IMR-90 (cell line): ENCODE measurements at regions of chr4 and their contacts with region 1.

Region 1: GRCh38 chr4:121192480-121192879 is 28.4 kb upstream of the TNIP3 start:
- DNase-seq: peak; percentile 48
- ATAC-seq: peak; percentile 86
- H3K4me3 ChIP-seq: peak overlapping the region; percentile 25; the same call in 1 of the 2 replicates
- H3K27ac ChIP-seq: no peak overlapping the region
- H3K4me1 ChIP-seq: no peaks in the 10 kb centered on the region
- H3K27me3 ChIP-seq: peaks cover 2% of the 10 kb centered on the region
- CTCF ChIP-seq: peak; percentile 79
- POLR2A ChIP-seq: no peak
- RAD21 ChIP-seq: peak; percentile 72

Region 2: GRCh38 chr4:121182296-121182695 is 10.2 kb before region 1 on chr4:
- CTCF ChIA-PET with region 1: interaction called, 13 read pairs
- POLR2A ChIA-PET with region 1: no interaction called
- dilution Hi-C with region 1: no loop called
- in situ Hi-C with region 1: no loop called
- intact Hi-C with region 1: no loop called
- DNase-seq: peak; percentile 33
- ATAC-seq: peak; percentile 54
- H3K4me3 ChIP-seq: peak overlapping the region; percentile 10; the same call in 1 of the 2 replicates
- H3K27ac ChIP-seq: no peak overlapping the region
- H3K4me1 ChIP-seq: no peaks in the 10 kb centered on the region
- H3K27me3 ChIP-seq: no peaks in the 10 kb centered on the region
- CTCF ChIP-seq: no peak
- POLR2A ChIP-seq: no peak
- RAD21 ChIP-seq: no peak

Region 3: DNA sequence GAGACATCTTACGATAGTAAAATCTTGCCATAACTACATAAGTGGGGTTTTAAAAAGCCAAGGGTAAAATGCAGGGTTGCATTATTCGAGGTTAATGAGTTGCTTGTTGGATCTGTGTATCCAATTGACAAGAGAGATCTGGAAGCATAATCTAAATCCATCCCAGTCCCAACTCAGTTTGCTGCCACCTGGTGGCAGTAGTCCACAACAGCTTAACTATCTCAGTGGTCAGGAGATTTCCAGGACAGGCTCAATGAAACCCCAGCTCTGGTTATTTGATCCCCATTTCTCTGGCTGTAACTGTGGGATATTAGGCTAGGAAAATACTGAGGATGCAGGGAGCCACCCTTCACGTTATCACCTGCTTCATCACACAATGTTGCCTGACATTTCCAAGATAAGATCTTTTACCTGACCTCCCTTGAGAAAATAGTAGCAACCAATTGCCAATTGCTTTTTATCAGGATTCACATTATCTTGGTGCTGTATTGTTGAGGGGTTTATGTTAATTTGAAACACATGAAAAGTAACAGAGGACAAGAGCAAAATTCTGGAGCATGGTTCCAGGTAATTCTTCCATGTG is 59.8 kb after region 1 on chr4:
- CTCF ChIA-PET with region 1: interaction called, 19 read pairs
- POLR2A ChIA-PET with region 1: no interaction called
- dilution Hi-C with region 1: no loop called
- in situ Hi-C with region 1: loop called (anchors 5 kb)
- intact Hi-C with region 1: loop called (anchors 1 kb)
- DNase-seq: peak; percentile 65
- ATAC-seq: peak; percentile 88
- H3K4me3 ChIP-seq: no peak overlapping the region
- H3K27ac ChIP-seq: no peak overlapping the region
- H3K4me1 ChIP-seq: no peaks in the 10 kb centered on the region
- H3K27me3 ChIP-seq: no peaks in the 10 kb centered on the region
- CTCF ChIP-seq: peak; percentile 78
- POLR2A ChIP-seq: no peak
- RAD21 ChIP-seq: peak; percentile 63

Region 4: DNA sequence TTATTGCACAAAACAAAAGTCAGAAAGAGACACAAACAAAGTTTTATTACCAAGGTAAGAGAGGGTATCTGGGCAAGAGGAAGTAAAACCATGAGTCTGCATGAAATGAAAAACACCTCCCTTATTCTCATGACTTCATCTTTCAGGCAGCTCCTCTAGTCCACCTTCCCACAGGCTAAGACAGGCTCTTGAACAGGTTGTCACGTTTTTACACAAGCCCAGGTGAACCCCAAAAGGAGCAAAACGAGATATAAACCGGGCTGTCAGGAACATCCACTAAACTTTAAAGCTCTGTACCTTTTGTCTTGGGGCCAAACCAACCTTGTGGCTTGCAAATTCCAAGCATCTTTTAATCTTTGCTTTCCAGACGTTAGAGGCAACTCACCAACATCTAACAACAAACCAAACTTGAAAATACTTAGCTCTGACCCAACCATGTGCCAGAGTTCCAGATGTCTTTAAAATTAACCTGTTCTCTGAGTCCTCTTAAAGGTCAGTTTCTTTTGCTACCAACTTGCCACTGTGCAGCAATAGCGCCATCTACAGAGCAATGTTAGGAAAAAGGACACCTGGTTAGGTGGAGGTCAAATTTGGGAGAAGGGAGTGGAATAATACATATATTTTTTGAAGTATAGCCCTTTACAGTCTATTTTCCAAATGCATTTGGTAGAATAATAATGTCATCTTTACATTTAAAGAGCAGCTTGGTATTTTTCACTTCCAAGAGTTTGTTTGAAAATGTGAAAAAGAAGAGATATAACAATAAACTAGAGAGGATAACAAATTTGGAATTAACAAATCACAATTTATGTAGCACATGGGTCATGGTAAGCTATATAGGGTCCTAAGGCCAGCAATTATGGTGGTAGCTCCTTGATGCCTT is 115.2 kb after region 1 on chr4:
- CTCF ChIA-PET with region 1: no interaction called
- POLR2A ChIA-PET with region 1: no interaction called
- dilution Hi-C with region 1: no loop called
- in situ Hi-C with region 1: no loop called
- intact Hi-C with region 1: loop called (anchors 1 kb)
- DNase-seq: peak; percentile 34
- ATAC-seq: peak; percentile 40; the same call in 1 of the 2 replicates
- H3K4me3 ChIP-seq: no peak overlapping the region
- H3K27ac ChIP-seq: no peak overlapping the region
- H3K4me1 ChIP-seq: no peaks in the 10 kb centered on the region
- H3K27me3 ChIP-seq: no peaks in the 10 kb centered on the region
- CTCF ChIP-seq: peak; percentile 45
- POLR2A ChIP-seq: no peak
- RAD21 ChIP-seq: peak; percentile 46

Region 5: DNA sequence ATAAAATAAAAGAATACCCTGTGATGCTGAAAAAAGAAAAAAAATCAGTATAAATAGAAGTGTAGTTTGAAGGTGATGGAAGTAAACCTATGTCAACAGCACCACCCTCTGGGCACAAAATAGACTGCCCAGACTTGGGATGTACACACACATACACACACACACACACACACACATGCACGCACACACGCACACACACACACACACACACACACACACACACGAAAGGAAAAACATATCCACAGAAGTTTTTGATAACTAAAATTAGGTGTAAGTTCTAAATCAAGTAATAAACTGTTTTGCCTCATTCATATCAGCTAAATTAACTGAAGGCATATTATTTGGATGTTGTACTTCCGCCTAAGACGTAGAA is 463.8 kb after region 1 on chr4:
- CTCF ChIA-PET with region 1: no interaction called
- POLR2A ChIA-PET with region 1: no interaction called
- dilution Hi-C with region 1: no loop called
- in situ Hi-C with region 1: no loop called
- intact Hi-C with region 1: loop called (anchors 5 kb)
- DNase-seq: peak; percentile 79
- ATAC-seq: peak; percentile 94
- H3K4me3 ChIP-seq: no peak overlapping the region
- H3K27ac ChIP-seq: no peak overlapping the region
- H3K4me1 ChIP-seq: no peaks in the 10 kb centered on the region
- H3K27me3 ChIP-seq: no peaks in the 10 kb centered on the region
- CTCF ChIP-seq: peak; percentile 63
- POLR2A ChIP-seq: no peak
- RAD21 ChIP-seq: peak; percentile 58

Region 6: DNA sequence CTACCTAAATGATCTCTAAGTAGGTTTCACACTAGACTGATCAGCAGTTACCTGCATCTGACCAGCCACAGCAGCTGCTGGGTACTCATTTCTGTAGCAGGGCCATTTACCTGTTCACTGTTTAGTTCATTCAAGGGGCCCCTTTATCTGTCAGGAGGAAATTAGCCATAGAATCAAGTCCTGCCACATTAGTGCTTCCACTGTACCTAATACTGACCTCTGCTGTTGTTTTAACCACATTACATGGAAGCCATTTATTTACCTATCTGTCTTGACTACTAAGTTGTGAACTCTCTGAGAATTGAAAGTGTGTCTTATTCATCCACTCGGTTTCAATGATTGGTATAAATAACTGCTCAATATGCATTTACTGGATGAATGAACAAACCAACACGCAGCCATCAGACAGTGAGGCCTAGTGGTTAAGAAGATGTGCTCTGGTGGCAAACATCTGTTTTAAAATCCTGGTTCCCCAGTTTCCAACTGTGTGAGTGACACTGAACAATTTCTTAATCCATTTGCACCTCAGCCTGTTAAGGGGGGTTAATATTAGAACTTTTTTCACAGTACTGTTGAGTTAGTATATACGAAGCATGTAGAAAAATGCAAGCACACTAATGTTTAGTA is 534.3 kb after region 1 on chr4:
- CTCF ChIA-PET with region 1: no interaction called
- POLR2A ChIA-PET with region 1: no interaction called
- dilution Hi-C with region 1: no loop called
- in situ Hi-C with region 1: loop called (anchors 25 kb)
- intact Hi-C with region 1: no loop called
- DNase-seq: peak; percentile 78
- ATAC-seq: peak; percentile 52
- H3K4me3 ChIP-seq: no peak overlapping the region
- H3K27ac ChIP-seq: 0 out of 2 replicates have a peak overlapping the region, but pooled peaks have one; percentile 13
- H3K4me1 ChIP-seq: peaks cover 7% of the 10 kb centered on the region
- H3K27me3 ChIP-seq: no peaks in the 10 kb centered on the region
- CTCF ChIP-seq: peak; percentile 78
- POLR2A ChIP-seq: no peak
- RAD21 ChIP-seq: peak; percentile 80

Region 7: DNA sequence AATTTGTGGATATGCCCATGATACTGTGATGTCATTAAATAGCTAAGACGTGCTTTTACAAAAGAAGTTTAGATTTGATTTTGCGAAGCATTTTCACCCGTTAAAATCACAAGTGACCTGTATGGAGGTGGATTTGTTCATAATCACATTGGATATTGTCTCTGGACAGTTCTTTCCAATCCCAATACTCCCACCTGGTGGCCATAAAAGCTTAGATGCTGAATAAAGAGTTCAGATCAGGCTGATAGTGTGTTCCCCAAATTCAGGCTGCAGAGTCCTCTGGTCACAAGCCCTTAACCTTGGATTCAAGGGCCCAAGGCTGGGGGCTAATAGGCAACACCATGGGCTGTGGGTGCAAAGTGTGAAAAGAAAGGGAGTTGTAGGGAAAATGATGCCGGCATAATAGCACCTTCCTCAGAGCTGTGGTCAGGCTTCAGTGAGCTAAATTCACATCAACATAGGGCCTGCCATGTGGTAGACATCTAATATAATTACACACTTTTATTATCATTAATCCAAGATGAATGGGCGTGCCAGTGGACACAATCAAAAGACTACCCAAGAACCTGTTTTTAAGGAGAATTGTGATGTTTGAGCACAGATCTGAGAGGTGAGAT is 544.4 kb after region 1 on chr4:
- CTCF ChIA-PET with region 1: interaction called, 3 read pairs
- POLR2A ChIA-PET with region 1: no interaction called
- dilution Hi-C with region 1: no loop called
- in situ Hi-C with region 1: loop called (anchors 25 kb)
- intact Hi-C with region 1: loop called (anchors 2 kb)
- DNase-seq: peak; percentile 70
- ATAC-seq: peak; percentile 70
- H3K4me3 ChIP-seq: no peak overlapping the region
- H3K27ac ChIP-seq: no peak overlapping the region
- H3K4me1 ChIP-seq: peaks cover 17% of the 10 kb centered on the region
- H3K27me3 ChIP-seq: no peaks in the 10 kb centered on the region
- CTCF ChIP-seq: peak; percentile 77
- POLR2A ChIP-seq: no peak
- RAD21 ChIP-seq: peak; percentile 87